ENCODE measurements at regions of chr17 and their contacts with region 1.

Region 1: GRCh38 chr17:59753522-59754467 is 46.3 kb downstream of the VMP1 start:
- DNase-seq: peak in 1 of 2 experiments; percentile 77
- H3K4me3 ChIP-seq: no peak overlapping the region
- H3K4me3 Mint-ChIP-seq: peak overlapping the region; percentile 60
- H3K27ac Mint-ChIP-seq: peak overlapping the region; percentile 89
- H3K4me1 ChIP-seq: peaks cover 45% of the 10 kb centered on the region
- H3K4me1 Mint-ChIP-seq: peaks cover 45% of the 10 kb centered on the region
- H3K27me3 ChIP-seq: no peaks in the 10 kb centered on the region
- H3K27me3 Mint-ChIP-seq: no peaks in the 10 kb centered on the region
- CTCF ChIP-seq: peak; percentile 62 to 64

Region 2: GRCh38 chr17:59707114-59707970 is 46.5 kb before region 1 on chr17 and contains the starts of genes PTRH2 and VMP1:
- CTCF ChIA-PET with region 1: no interaction called
- POLR2A ChIA-PET with region 1: interaction called, 11 read pairs
- intact Hi-C with region 1: no loop called
- DNase-seq: peak; percentile 99 to 100
- H3K4me3 ChIP-seq: peak within 1 kb of the TSS; percentile 90
- H3K4me3 Mint-ChIP-seq: peak within 1 kb of the TSS; percentile 97
- H3K27ac Mint-ChIP-seq: peak within 1 kb of the TSS; percentile 98
- H3K4me1 ChIP-seq: peaks cover 11% of the 10 kb centered on the region
- H3K4me1 Mint-ChIP-seq: peaks cover 10% of the 10 kb centered on the region
- H3K27me3 ChIP-seq: no peaks in the 10 kb centered on the region
- H3K27me3 Mint-ChIP-seq: no peaks in the 10 kb centered on the region
- CTCF ChIP-seq: no peak
- total RNA-seq, gene PTRH2: 36.1 and 36.6 TPM in 2 replicates
- total RNA-seq, gene VMP1: 277 and 297 TPM in 2 replicates

Region 3: GRCh38 chr17:59804901-59805465 is 51.2 kb after region 1 on chr17:
- CTCF ChIA-PET with region 1: no interaction called
- POLR2A ChIA-PET with region 1: interaction called, 9 read pairs
- intact Hi-C with region 1: loop called (anchors 1 kb)
- DNase-seq: no peak
- H3K4me3 ChIP-seq: no peak overlapping the region
- H3K4me3 Mint-ChIP-seq: no peak overlapping the region
- H3K27ac Mint-ChIP-seq: no peak overlapping the region
- H3K4me1 ChIP-seq: peaks cover 19% of the 10 kb centered on the region; the same call in 1 of the 2 replicates
- H3K4me1 Mint-ChIP-seq: peaks cover 15% of the 10 kb centered on the region
- H3K27me3 ChIP-seq: no peaks in the 10 kb centered on the region
- H3K27me3 Mint-ChIP-seq: no peaks in the 10 kb centered on the region
- CTCF ChIP-seq: no peak

Region 4: DNA sequence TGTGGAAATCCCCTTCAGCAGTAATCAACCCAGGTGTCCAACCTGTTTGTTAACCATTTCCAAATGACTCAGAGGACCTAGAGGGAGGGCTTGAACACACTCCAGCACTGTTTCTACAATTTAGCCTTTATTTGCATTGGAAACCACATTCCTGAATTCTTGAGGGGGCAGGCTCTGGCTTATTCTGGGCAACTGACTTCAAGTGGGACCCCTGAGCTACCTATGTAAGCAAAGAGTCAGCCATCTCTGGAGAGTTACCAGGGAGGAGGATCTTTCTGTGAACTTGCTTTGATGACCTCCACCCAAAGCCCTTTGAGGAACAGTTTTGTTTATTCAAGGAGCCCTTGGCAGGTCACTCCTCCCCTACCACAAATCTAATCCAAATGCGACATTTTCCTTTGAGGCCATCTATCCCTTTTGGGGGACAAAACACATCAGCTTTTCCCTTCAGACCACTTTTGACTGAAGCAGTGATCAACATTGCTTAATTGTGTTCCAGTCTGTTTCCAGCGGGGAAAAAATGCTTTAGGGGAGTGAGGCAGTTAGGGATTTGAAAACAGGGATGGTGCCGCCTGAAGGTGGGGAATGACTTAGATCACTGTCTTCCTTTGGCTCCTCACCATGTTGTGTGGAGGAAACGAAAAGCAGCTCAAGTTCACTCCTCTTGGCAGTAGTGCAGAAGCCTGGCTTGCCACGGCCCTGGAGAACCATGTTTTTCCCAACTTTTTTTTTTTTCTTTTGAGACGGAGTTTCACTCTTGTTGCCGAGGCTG is 92.8 kb after region 1 on chr17:
- CTCF ChIA-PET with region 1: interaction called, 6 read pairs
- POLR2A ChIA-PET with region 1: interaction called, 12 read pairs
- intact Hi-C with region 1: no loop called
- DNase-seq: peak; percentile 79 to 80
- H3K4me3 ChIP-seq: no peak overlapping the region
- H3K4me3 Mint-ChIP-seq: peak overlapping the region; percentile 89
- H3K27ac Mint-ChIP-seq: peak overlapping the region; percentile 98
- H3K4me1 ChIP-seq: peaks cover 81% of the 10 kb centered on the region
- H3K4me1 Mint-ChIP-seq: peaks cover 68% of the 10 kb centered on the region
- H3K27me3 ChIP-seq: no peaks in the 10 kb centered on the region
- H3K27me3 Mint-ChIP-seq: no peaks in the 10 kb centered on the region
- CTCF ChIP-seq: no peak

Region 5: GRCh38 chr17:59859444-59860025 is 105.7 kb after region 1 on chr17:
- CTCF ChIA-PET with region 1: interaction called, 21 read pairs
- POLR2A ChIA-PET with region 1: interaction called, 3 read pairs
- intact Hi-C with region 1: loop called (anchors 1 kb)
- DNase-seq: no peak
- H3K4me3 ChIP-seq: no peak overlapping the region
- H3K4me3 Mint-ChIP-seq: no peak overlapping the region
- H3K27ac Mint-ChIP-seq: no peak overlapping the region
- H3K4me1 ChIP-seq: peaks cover 38% of the 10 kb centered on the region
- H3K4me1 Mint-ChIP-seq: peaks cover 15% of the 10 kb centered on the region
- H3K27me3 ChIP-seq: no peaks in the 10 kb centered on the region
- H3K27me3 Mint-ChIP-seq: no peaks in the 10 kb centered on the region
- CTCF ChIP-seq: peak; percentile 35 to 55

Measured in Caco-2 (cell line).